ENCODE measurements at regions of chr10 and their contacts with region 1.

Region 1: DNA sequence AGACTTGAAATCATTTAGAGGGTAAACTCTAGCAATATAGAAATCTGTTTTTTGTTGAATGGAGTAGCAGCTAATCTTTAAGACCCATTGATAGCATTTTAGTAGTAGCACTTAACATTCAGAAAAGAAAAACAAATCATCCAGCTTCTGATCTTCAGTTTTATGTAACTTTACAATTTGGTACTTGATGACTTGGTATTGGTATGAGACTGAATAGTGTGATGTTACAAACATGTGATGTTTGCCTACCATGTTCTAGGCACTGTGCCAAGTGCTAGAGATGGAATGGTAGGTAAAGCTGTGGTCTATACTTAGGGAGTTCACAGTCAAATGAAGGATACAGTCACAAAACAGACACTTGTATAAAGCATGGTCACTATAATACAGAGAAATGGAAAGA is 21.3 kb downstream of the ZEB1 start:
- DNase-seq: no peak
- ATAC-seq: peak in 2 of 4 donors; percentile 29 to 59
- H3K4me3 ChIP-seq: no peak overlapping the region
- H3K27ac ChIP-seq: peak overlapping the region in 1 of 12 donors; percentile 4
- H3K4me1 ChIP-seq: peaks cover 0 to 58% (median 35%) of the 10 kb centered on the region in 12 donors
- H3K27me3 ChIP-seq: no peaks in the 10 kb centered on the region
- CTCF ChIP-seq: no peak
- POLR2A ChIP-seq: no peak

Region 2: DNA sequence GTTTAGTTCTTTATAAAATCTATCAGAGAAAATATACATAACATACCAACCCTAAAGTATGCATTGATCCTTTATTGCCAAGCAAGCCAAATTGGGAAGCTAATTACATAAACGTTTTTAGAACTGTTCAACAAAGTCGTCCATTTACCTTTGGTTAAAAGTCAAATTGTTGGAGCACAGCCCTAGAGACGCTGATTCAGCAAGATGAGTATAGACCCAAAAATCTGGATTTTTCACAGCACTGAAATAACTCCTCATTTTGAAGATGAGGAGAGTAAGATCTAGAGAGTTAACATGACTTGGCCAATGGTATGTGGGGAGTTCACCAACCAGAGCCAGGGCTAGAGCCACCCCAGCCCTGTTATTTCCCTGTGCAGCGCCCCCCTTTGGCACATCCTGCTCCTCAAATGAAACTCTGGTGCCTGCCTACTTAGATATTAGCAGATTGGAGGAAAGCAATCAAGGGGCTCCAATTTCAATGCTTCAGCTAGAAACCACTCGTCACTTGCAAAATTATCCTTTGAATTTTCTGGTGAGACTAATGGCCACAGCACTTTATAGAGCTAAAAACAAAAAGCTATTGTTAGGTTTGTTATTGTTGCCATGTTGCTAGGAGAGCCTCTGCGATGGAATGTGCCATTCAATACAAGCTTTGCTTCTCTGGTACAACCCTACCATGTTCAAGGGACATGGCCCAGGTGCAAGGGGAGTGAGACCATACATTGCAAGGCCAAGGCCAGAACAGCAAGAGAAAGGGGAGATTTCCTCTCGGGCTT is 153.9 kb before region 1 on chr10:
- intact Hi-C with region 1: no loop called
- DNase-seq: no peak
- ATAC-seq: peak; percentile 80 to 94 (median 86)
- H3K4me3 ChIP-seq: no peak overlapping the region
- H3K27ac ChIP-seq: peak overlapping the region in 9 of 12 donors; percentile 17 to 58 (median 48)
- H3K4me1 ChIP-seq: peaks cover 0 to 16% (median 8%) of the 10 kb centered on the region in 12 donors
- H3K27me3 ChIP-seq: no peaks in the 10 kb centered on the region
- CTCF ChIP-seq: peak in 4 of 12 donors; percentile 8 to 30 (median 17)
- POLR2A ChIP-seq: no peak

Region 3: DNA sequence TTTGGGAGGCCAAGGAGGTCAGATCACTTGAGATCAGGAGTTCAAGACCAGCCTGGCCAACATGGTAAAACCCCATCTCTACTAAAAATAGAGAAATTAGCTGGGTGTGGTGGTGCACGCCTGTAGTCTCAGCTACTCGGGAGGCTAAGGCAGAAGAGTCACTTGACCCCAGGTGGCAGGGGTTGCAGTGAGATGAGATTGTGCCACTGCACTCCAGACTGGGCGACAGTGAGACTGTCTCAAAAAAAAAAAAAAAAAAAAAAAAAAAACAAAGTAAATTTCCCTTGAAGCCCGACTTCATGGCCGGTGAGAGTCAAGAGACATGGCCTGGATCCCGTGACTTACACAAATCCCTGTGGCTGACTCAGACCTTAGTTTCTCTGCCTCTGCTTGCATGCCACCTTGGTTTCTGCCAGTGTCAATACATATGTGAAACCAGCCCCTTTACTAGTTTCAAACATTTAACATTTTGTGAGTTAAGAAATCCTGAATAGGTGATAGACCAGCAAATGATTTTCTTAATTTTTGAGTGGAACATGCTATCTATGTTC is 41.5 kb after region 1 on chr10:
- intact Hi-C with region 1: no loop called
- DNase-seq: no peak
- ATAC-seq: no peak
- H3K4me3 ChIP-seq: no peak overlapping the region
- H3K27ac ChIP-seq: no peak overlapping the region
- H3K4me1 ChIP-seq: peaks cover 0 to 32% (median 13%) of the 10 kb centered on the region in 12 donors
- H3K27me3 ChIP-seq: no peaks in the 10 kb centered on the region
- CTCF ChIP-seq: no peak
- POLR2A ChIP-seq: no peak

Region 4: DNA sequence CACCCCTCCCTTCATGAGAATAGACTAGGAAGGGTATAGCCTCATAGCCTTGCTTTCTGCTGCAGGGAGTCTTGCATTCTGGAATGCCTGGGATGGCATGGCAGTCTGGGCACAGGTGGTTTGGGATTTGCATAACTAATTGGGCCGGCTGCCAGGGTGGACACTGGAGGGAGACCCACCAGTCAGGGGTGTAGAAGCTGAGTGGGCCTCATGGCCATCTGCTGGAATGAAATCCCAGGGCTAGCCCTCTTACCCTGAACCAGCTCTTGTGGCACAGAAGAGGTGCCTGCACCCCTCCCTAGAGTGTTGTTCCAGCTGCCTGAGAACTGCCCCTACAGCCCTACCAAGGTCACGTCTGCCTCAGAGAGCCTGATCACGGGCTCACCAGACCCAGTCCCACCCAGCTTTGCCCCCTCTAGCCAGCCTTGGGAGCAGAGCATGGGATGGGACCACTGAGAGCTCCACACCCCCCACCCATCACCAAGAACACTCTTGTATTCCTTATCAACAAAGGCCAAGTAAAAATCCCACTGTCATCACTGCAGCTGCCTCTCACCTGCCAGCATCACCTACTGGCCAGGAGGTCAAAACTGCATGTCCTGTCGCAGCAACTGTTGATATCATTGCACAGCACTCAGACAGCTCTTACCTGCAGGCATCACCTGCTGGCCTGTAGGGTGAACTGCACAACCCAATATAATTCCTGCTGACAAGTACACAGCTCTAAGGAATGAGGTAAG is 127.6 kb after region 1 on chr10:
- intact Hi-C with region 1: loop called in 1 of 10 experiments (anchors 10 kb)
- DNase-seq: peak in 3 of 5 donors; percentile 16 to 32 (median 26)
- ATAC-seq: peak; percentile 55 to 78 (median 68)
- H3K4me3 ChIP-seq: no peak overlapping the region
- H3K27ac ChIP-seq: no peak overlapping the region
- H3K4me1 ChIP-seq: peaks cover 0 to 9% (median 0%) of the 10 kb centered on the region in 12 donors
- H3K27me3 ChIP-seq: no peaks in the 10 kb centered on the region
- CTCF ChIP-seq: peak in 11 of 12 donors; percentile 40 to 62 (median 48)
- POLR2A ChIP-seq: no peak

Region 5: GRCh38 chr10:31687663-31688482 is 347.5 kb after region 1 on chr10:
- intact Hi-C with region 1: loop called in 1 of 10 experiments (anchors 10 kb)
- DNase-seq: no peak
- ATAC-seq: no peak
- H3K4me3 ChIP-seq: no peak overlapping the region
- H3K27ac ChIP-seq: no peak overlapping the region
- H3K4me1 ChIP-seq: no peaks in the 10 kb centered on the region
- H3K27me3 ChIP-seq: no peaks in the 10 kb centered on the region
- CTCF ChIP-seq: no peak
- POLR2A ChIP-seq: no peak

Measured in heart left ventricle (tissue), 16 donors.